Cardiac septum (tissue), 1 donor: ENCODE measurements at regions of chr20 and their contacts with region 1.

Region 1: DNA sequence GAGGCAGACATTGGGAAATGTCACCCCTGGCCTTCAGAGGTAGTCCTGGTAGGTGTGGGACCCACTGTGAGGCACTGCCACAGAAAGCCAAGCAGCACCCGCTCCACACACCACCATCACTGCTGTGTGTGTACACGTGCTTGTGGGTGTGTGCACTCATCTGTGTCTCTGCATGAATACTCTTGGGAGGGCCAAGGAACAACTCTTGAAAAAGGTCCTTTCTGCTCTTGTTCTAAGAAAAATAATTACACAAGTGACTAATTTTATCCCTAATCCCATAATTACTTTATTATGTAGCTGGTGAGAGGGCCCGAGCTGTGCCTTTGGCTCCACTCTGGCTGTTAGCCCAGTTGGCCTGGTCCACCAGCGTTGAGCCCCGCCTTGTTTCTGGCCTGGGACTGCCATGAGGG is 21.7 kb upstream of the EPB41L1 start:
- DNase-seq: no peak

Region 2: DNA sequence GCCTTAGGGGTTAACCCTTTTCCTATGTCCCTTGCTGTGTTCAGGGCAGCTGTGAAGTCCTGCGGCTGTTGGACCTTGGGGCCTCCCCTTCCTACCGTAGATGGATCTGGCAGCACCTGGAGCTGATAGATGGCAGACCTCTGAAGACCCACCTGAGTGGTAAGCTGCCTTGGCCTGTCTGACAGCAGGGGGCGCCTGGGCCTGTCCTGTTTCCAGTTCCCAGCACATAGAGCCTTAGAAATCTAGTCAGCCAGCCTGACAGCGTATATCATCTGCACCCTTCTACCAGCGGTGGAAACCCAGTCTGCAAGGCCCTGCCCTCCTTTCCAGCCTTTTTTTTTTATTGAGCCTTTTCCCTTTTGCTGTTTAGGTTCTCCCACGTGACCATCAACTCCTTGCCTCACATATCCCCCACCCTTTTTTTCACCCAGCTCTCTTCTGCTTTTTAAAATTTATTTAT is 137.8 kb before region 1 on chr20:
- intact Hi-C with region 1: loop called (anchors 1 kb)
- DNase-seq: peak; percentile 88